H1 (cell line): ENCODE measurements at regions of chr6 and their contacts with region 1.

Region 1: DNA sequence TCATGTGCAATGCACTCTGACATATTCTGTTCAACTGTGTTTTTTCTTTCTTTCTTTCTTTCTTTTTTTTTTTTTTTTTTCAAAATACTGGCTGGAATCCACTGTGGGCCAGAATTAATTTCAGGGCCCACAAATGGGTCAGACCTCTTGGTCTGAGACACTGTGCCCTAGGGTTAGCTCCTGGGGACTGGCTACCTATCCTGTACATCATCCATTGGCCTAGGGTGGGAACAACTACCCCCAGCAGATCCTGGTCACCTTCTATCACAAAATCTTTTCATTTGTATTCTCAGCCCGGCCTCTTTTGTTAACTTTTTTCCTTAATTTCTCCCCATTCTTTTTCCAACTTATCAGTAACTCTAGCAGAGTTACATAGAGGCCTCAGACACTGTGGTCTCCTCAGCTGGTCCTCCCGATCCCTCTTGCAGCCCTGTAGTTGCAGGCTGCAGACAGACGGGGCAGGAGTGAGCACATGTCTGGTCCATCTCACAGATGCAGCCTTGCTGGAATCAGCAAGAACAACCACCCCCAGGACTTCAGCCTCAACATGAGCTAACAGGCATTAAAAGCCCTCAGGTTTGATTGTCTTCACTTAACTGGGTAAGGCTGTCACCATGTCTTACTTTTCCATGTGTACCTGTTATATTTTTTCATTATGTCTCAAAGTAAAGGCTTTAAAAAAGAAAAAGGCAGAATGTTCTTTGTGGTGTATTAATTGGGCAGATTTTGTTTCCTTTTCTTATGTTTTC is 41.3 kb downstream of the TXLNB start:
- DNase-seq: peak; percentile 56 to 78
- H3K4me3 ChIP-seq: no peak overlapping the region
- H3K27ac ChIP-seq: no peak overlapping the region
- H3K4me1 ChIP-seq: no peaks in the 10 kb centered on the region
- H3K27me3 ChIP-seq: no peaks in the 10 kb centered on the region
- CTCF ChIP-seq: peak; percentile 73 to 96 (median 87)
- EP300 ChIP-seq: no peak
- POLR2A ChIP-seq: no peak
- RAD21 ChIP-seq: peak; percentile 60 to 75

Region 2: GRCh38 chr6:139219271-139219729 is 31.2 kb before region 1 on chr6:
- CTCF ChIA-PET with region 1: interaction called, 15 read pairs
- POLR2A ChIA-PET with region 1: no interaction called
- DNase-seq: peak; percentile 65 to 71
- H3K4me3 ChIP-seq: no peak overlapping the region
- H3K27ac ChIP-seq: no peak overlapping the region
- H3K4me1 ChIP-seq: no peaks in the 10 kb centered on the region
- H3K27me3 ChIP-seq: no peaks in the 10 kb centered on the region
- CTCF ChIP-seq: peak; percentile 86 to 93 (median 92)
- EP300 ChIP-seq: no peak
- POLR2A ChIP-seq: no peak
- RAD21 ChIP-seq: peak; percentile 98

Region 3: DNA sequence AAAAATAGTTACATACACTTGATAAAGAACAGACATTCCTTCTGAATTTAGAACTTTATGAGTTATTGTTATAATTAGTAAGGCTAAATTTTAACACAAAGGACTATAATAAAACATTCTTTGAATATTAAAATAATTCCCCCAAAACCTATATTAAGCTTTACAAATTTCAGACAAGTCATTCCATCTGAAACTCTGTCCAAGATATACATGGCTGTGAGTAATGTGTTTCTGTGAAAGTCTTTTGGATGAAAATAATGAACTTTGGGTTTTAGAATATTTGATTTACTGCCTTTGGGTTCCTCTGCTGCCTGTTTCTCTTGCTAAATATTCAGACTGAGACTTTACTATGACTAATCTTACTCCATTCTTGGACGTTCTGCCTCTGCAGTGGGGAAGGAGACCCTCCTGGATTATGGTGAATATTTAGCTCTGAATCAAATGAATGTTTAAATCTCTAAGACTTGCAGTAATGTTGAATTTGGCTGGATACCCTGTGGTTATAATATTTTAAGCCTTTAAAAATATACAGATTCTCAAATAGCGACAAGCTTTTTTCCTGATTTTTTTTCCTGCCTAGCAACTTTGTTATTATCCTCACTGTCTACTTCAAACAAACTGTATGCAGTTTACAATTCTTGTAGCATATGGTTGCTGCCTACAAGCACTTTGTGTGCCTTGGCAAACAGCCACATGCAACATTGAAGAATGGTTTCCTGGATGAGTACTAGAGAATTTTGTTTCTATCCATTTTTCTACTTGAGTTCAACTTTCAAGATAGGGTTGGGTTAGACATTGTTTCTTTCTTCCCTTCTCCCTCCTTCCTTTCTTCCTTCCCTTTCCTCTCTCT is 10.1 kb before region 1 on chr6:
- CTCF ChIA-PET with region 1: interaction called, 16 read pairs
- POLR2A ChIA-PET with region 1: no interaction called
- DNase-seq: no peak
- H3K4me3 ChIP-seq: no peak overlapping the region
- H3K27ac ChIP-seq: no peak overlapping the region
- H3K4me1 ChIP-seq: no peaks in the 10 kb centered on the region; a peak in 1 of 7 replicates
- H3K27me3 ChIP-seq: peaks cover 0 to 1% (median 0%) of the 10 kb centered on the region in 4 experiments; a peak in 1 of 7 replicates
- CTCF ChIP-seq: no peak
- EP300 ChIP-seq: no peak
- POLR2A ChIP-seq: no peak
- RAD21 ChIP-seq: no peak

Region 4: DNA sequence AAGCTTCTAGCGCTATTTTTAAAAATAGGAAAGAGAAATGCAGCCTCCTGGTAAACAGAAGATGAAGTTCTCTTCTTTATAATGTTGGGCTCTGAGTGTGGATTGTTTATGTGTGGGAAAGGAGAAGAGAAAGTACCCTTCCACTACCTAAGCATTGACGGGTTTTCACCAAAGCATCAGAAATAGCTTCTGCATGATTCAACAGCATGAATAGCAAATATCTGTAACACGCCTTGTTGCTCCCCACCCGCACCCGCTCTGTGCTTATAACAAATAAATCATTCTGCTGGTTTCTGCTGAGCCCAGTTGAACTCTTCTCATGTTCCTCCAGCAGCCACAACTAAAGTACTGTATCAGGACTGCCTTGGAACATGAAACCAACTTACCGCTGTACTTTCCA is 20.6 kb after region 1 on chr6:
- CTCF ChIA-PET with region 1: interaction called, 12 read pairs
- POLR2A ChIA-PET with region 1: no interaction called
- DNase-seq: no peak
- H3K4me3 ChIP-seq: no peak overlapping the region
- H3K27ac ChIP-seq: no peak overlapping the region
- H3K4me1 ChIP-seq: no peaks in the 10 kb centered on the region
- H3K27me3 ChIP-seq: no peaks in the 10 kb centered on the region
- CTCF ChIP-seq: no peak
- EP300 ChIP-seq: no peak
- POLR2A ChIP-seq: no peak
- RAD21 ChIP-seq: no peak

Region 5: DNA sequence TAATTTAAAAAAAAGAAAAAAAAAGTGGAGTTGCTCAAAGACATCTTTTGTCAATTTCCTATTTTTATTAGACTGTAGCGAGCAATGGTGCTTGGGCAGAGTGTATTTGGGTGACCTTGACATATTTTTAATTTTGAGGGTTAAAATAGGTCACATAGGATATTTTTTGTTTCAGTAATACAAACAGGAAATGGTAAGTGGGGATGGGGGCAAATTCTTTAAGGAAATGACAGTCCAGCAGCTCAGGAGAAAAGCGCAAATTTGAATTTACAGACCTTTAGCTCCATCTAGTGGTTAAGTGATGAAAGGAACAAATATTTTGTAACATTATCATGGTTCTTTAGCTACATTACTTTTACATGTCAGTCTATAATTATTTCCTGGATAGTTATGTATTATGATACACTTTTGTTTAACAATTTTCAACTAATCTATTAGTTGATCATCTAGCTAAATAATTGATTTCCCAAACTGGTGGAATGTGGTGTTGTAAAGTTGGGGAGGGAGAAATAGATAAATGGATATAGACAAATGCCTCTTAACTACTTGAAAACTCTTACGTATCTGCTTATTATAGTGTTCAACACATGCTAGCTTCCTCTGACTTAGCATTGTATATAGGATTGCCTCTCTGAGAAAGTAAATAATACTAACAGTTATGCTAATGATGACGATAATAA is 114.0 kb after region 1 on chr6:
- CTCF ChIA-PET with region 1: interaction called, 12 read pairs
- POLR2A ChIA-PET with region 1: no interaction called
- DNase-seq: no peak
- H3K4me3 ChIP-seq: no peak overlapping the region
- H3K27ac ChIP-seq: no peak overlapping the region
- H3K4me1 ChIP-seq: peaks cover 0 to 21% (median 15%) of the 10 kb centered on the region in 4 experiments; a peak in 5 of 7 replicates
- H3K27me3 ChIP-seq: no peaks in the 10 kb centered on the region
- CTCF ChIP-seq: peak in 2 of 3 experiments; percentile 48 to 54; a peak in 2 of 4 replicates
- EP300 ChIP-seq: no peak
- POLR2A ChIP-seq: no peak
- RAD21 ChIP-seq: peak; percentile 91 to 92

Region 6: GRCh38 chr6:139378882-139379341 is 128.4 kb after region 1 on chr6:
- CTCF ChIA-PET with region 1: no interaction called
- POLR2A ChIA-PET with region 1: no interaction called
- DNase-seq: no peak
- H3K4me3 ChIP-seq: no peak overlapping the region
- H3K27ac ChIP-seq: no peak overlapping the region
- H3K4me1 ChIP-seq: peaks cover 7 to 9% (median 8%) of the 10 kb centered on the region in 4 experiments; a peak in 6 of 7 replicates
- H3K27me3 ChIP-seq: 0 out of 7 replicates have a peak, but pooled peaks cover 0 to 3% (median 0%) of the 10 kb centered on the region in 4 experiments
- CTCF ChIP-seq: no peak
- EP300 ChIP-seq: no peak
- POLR2A ChIP-seq: no peak
- RAD21 ChIP-seq: no peak